Esophagus muscularis mucosa (tissue), 4 donors: ENCODE measurements at regions of chr9 and their contacts with region 1.

Region 1: GRCh38 chr9:104927912-104928740 is at the start of gene ABCA1:
- DNase-seq: peak; percentile 99
- H3K4me3 ChIP-seq: peak within 1 kb of the TSS; percentile 87 to 93 (median 90)
- H3K27ac ChIP-seq: peak within 1 kb of the TSS; percentile 91 to 94 (median 94)
- H3K4me1 ChIP-seq: peaks cover 27 to 39% (median 39%) of the 10 kb centered on the region in 4 donors
- H3K27me3 ChIP-seq: no peaks in the 10 kb centered on the region
- CTCF ChIP-seq: no peak
- EP300 ChIP-seq: no peak
- POLR2A ChIP-seq: peak; percentile 81
- total RNA-seq, gene ABCA1: 47.8 to 73.9 (median 54.7) TPM

Region 2: GRCh38 chr9:104968025-104968982 is 40.2 kb after region 1 on chr9:
- intact Hi-C with region 1: loop called (anchors 1 kb)
- DNase-seq: peak; percentile 98
- H3K4me3 ChIP-seq: peak overlapping the region; percentile 67 to 92 (median 76)
- H3K27ac ChIP-seq: peak overlapping the region; percentile 93 to 98 (median 94)
- H3K4me1 ChIP-seq: peaks cover 20 to 40% (median 37%) of the 10 kb centered on the region in 4 donors
- H3K27me3 ChIP-seq: no peaks in the 10 kb centered on the region
- CTCF ChIP-seq: peak in 1 of 3 experiments; percentile 10
- EP300 ChIP-seq: peak; percentile 56
- POLR2A ChIP-seq: no peak

Region 3: DNA sequence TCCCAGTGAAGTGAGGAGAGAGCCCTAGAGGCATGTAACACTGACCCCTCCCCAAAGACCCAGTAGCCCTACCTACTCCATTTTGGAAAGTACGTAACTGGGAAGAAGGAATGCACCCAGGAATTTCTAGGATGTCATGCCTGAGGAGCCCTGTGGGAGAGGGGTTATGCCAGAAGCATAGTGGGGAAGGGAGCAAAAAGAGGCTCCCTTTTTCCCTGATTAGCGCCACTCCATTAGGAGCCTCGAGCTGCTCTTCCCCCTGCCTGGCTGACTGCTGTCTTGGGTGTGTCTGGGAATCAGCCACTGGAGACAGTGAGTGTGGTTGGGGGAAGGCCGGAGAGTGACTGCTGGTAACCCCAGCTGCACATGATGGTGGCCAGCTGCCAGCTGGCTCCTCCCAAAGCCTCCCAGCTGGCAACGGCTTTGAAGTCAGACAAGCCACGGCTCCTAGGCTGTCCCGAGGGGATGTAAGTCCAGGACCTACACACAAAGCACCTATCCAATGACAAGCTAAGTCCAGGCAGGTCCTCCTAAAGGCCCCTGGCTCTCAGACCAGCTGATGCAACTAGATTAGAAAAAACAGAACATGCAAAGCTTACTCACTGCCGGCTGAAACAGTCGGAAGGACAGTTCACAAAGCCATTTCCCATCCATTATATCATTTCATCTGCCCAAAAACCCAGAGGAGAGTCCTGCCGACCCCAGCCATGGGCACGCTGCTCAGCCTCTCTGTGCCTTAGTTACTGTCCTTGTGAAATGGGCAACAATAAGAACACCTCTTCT is 136.4 kb after region 1 on chr9:
- intact Hi-C with region 1: loop called (anchors 5 kb)
- DNase-seq: peak; percentile 97
- H3K4me3 ChIP-seq: peak overlapping the region in 3 of 4 donors; percentile 0 to 26 (median 3)
- H3K27ac ChIP-seq: peak overlapping the region; percentile 81 to 94 (median 88)
- H3K4me1 ChIP-seq: peaks cover 24 to 44% (median 43%) of the 10 kb centered on the region in 4 donors
- H3K27me3 ChIP-seq: no peaks in the 10 kb centered on the region
- CTCF ChIP-seq: no peak
- EP300 ChIP-seq: peak; percentile 56
- POLR2A ChIP-seq: no peak

Region 4: DNA sequence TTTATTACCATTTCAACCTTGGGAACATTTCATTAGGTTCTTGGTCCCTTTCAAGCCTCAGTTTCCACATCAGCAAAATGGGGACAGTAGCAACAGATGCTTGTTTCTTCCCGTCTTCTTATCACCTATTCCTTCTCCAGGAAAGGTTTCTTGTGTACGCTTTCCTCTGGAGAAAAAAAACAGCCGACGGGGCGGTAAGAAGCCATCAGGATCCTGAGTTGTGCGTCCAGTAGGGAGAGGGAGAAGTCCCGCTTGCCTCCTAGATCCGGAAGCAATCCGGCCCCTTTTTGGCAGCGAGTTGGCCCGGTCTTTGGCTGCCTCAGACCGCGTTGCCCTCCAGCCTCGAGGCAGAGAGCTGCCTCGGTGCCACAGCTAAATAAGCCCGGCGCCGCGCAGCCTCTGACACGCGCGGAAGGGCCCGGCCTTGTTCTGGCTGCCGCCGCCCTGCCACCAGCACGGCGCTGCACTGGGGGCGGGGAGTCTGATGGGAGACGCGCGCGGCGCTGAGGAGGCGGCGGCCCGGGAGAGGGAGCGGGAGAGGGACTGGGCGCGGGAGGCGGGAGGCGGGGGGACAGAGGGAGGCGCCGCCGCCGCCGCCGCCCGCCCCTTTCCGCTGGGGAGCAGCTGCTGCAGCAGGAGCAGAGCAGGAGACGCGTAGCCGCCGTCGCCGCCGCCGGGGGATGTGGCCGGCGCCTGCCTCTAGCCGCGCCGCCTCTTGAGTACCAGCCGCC is 316.0 kb after region 1 on chr9 and contains the start of gene SLC44A1:
- intact Hi-C with region 1: loop called (anchors 5 kb)
- DNase-seq: peak; percentile 98
- H3K4me3 ChIP-seq: peak within 1 kb of the TSS; percentile 82 to 94 (median 86)
- H3K27ac ChIP-seq: peak within 1 kb of the TSS; percentile 81 to 84 (median 82)
- H3K4me1 ChIP-seq: peaks cover 9 to 55% (median 49%) of the 10 kb centered on the region in 4 donors
- H3K27me3 ChIP-seq: no peaks in the 10 kb centered on the region
- CTCF ChIP-seq: peak in 1 of 3 experiments; percentile 12
- EP300 ChIP-seq: no peak
- POLR2A ChIP-seq: no peak
- total RNA-seq, gene SLC44A1: 25.7 to 37.8 (median 28.3) TPM